Activated CD8-positive, alpha-beta T cell treated with anti-CD3 and anti-CD28 coated beads for 36 hours (primary cell): ENCODE measurements at regions of chr2 and their contacts with region 1.

Region 1: DNA sequence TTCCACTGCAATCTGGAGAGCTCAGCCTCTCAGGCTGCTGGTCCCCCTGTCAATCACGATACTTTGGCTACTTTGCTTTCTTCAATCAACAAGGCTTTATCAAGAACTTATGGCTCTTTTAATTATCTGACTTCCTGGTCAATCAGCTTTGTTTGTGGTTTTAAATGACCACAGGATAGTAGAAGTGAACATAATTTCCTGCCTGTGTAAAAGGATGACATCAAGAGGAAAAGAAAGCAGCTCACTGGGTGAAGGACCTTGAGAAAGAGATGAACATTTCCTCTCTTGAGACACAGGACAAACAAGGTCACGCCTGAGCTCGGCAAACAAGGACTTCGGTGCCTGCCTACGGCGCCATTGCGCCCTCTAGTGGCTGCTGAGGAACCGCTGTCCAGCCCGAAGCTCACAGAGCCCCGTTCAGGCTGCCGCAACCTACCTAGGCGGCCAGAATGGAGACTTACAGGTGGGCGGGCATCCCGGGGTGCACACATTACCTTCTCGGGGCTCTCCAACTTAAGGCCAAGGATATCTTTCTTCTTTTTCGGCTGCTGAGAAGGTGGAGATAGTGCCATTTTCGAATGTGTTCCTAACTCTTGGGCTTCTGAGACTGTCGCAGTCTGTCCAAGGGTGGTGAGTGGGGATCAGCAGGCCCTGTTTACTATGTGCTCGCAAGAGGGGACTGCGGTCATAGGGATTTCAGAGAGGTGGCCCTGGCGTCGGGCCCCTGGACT is 54.0 kb downstream of the IL1RL2 start:
- DNase-seq: peak; percentile 92
- ATAC-seq: peak; percentile 90
- H3K4me3 Mint-ChIP-seq: no peak overlapping the region
- H3K27ac Mint-ChIP-seq: peak overlapping the region; percentile 65
- H3K4me1 Mint-ChIP-seq: peaks cover 32% of the 10 kb centered on the region
- H3K27me3 Mint-ChIP-seq: no peaks in the 10 kb centered on the region
- CTCF ChIP-seq: peak; percentile 92

Region 2: GRCh38 chr2:101883863-101884262 is 356.9 kb before region 1 on chr2:
- CTCF ChIA-PET with region 1: interaction called, 29 read pairs
- POLR2A ChIA-PET with region 1: no interaction called
- intact Hi-C with region 1: no loop called
- DNase-seq: peak; percentile 48
- ATAC-seq: peak; percentile 97
- H3K4me3 Mint-ChIP-seq: no peak overlapping the region
- H3K27ac Mint-ChIP-seq: no peak overlapping the region
- H3K4me1 Mint-ChIP-seq: peaks cover 7% of the 10 kb centered on the region
- H3K27me3 Mint-ChIP-seq: no peaks in the 10 kb centered on the region
- CTCF ChIP-seq: peak; percentile 58

Region 3: DNA sequence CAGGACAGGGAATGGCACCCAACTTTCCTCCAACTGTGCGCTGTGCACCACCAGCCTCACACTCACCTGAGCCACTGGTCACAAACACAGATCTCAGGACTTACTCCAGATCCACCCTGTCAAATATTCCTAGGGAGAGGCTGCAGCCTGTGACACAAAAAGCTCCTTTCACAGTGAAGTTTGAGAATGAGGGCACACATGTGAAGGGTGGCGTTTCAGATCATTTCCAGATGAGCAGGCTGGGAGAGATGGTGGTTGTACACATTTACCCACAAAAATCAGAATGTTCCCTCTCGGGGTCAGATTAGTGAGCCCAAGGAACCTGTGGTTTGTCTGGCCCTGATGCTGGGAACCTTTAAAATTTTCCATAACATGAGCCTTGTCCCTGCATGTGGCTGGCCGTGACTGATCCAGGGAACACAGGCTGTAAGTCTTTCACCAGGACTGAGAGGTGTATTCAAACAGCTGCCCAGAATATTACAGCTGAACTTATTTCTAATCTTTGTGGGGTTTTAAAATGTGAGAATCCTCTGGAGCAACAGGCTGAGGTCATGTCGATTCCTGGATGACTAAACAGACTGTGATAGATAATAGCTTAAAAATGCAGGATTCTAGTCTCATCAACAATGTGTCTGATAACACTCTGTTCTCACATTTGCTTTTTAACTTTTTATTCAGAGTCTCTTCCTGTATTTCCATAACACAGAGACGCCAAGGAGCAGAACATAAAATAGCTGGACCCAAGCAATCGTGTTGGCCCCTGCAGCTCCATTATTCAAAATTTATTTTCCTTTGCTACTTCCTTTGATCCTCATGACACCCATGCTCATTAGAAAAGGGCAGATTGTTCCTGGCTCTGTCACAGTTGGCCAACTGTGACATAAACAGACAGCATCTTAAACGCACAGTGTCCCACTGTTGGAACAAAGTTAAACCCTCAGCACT is 213.5 kb before region 1 on chr2:
- CTCF ChIA-PET with region 1: interaction called, 19 read pairs
- POLR2A ChIA-PET with region 1: interaction called, 3 read pairs
- intact Hi-C with region 1: no loop called
- DNase-seq: no peak
- ATAC-seq: no peak
- H3K4me3 Mint-ChIP-seq: no peak overlapping the region
- H3K27ac Mint-ChIP-seq: no peak overlapping the region
- H3K4me1 Mint-ChIP-seq: peaks cover 15% of the 10 kb centered on the region
- H3K27me3 Mint-ChIP-seq: no peaks in the 10 kb centered on the region
- CTCF ChIP-seq: no peak

Region 4: GRCh38 chr2:102082571-102083392 is 158.0 kb before region 1 on chr2:
- CTCF ChIA-PET with region 1: interaction called, 14 read pairs
- POLR2A ChIA-PET with region 1: interaction called, 4 read pairs
- intact Hi-C with region 1: no loop called
- DNase-seq: peak; percentile 74
- ATAC-seq: peak; percentile 93
- H3K4me3 Mint-ChIP-seq: peak overlapping the region; percentile 56
- H3K27ac Mint-ChIP-seq: peak overlapping the region; percentile 92
- H3K4me1 Mint-ChIP-seq: peaks cover 53% of the 10 kb centered on the region
- H3K27me3 Mint-ChIP-seq: no peaks in the 10 kb centered on the region
- CTCF ChIP-seq: no peak

Region 5: GRCh38 chr2:102141970-102142828 is 98.6 kb before region 1 on chr2 and contains the start of gene IL1R1:
- CTCF ChIA-PET with region 1: interaction called, 15 read pairs
- POLR2A ChIA-PET with region 1: no interaction called
- intact Hi-C with region 1: no loop called
- DNase-seq: no peak
- ATAC-seq: peak; percentile 40
- H3K4me3 Mint-ChIP-seq: peak within 1 kb of the TSS; percentile 39
- H3K27ac Mint-ChIP-seq: no peak within 1 kb of the TSS
- H3K4me1 Mint-ChIP-seq: peaks cover 39% of the 10 kb centered on the region
- H3K27me3 Mint-ChIP-seq: peaks cover 28% of the 10 kb centered on the region
- CTCF ChIP-seq: no peak
- total RNA-seq, gene IL1R1: 0.63 to 0.68 TPM

Region 6: GRCh38 chr2:102217032-102217431 is 23.8 kb before region 1 on chr2:
- CTCF ChIA-PET with region 1: interaction called, 23 read pairs
- POLR2A ChIA-PET with region 1: no interaction called
- intact Hi-C with region 1: no loop called
- DNase-seq: no peak
- ATAC-seq: no peak
- H3K4me3 Mint-ChIP-seq: no peak overlapping the region
- H3K27ac Mint-ChIP-seq: no peak overlapping the region
- H3K4me1 Mint-ChIP-seq: peaks cover 12% of the 10 kb centered on the region
- H3K27me3 Mint-ChIP-seq: no peaks in the 10 kb centered on the region
- CTCF ChIP-seq: no peak

Region 7: DNA sequence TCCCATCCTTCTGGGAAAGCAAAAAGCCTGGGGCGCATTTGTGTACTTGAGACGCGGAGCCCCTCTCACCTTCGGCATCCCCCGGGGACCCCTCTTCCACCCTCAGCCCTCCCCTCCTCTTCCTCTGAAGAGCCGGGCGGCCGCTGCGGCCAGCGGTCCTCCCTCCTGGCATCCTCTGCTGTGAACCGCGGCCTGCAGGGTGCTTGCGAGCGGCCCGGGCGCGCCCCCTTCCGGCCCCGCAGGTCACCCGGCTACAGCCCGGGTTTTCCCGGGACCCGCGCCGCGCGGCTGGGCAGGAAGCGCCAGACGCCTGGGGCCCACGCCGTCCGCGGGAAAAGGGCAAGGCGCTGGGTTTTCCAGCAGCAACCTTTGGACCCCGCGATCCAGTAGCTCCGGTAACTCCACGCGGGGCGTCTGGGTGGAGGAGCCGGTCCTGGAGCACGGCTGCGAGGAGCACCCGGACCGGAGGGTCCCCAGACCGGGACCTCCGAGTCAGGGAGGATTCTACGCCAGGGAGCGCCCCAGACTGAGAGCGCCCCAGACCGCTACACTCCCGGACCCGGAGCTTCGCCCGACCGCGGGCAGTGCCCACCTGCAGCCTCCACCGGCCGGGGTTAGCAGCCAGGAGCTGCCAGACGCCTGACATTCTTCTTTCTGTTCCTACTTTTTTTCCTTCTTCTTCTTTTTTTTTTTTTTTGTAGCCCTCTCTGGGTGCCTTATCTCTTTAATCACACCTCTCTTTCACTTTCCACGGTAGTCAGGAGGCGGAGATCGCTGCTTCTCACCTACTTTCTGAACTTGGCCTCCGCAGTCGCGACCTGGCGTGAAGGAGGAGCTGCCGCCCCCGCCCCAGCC is 114.9 kb after region 1 on chr2 and contains the start of gene IL18R1:
- CTCF ChIA-PET with region 1: interaction called, 27 read pairs
- POLR2A ChIA-PET with region 1: interaction called, 3 read pairs
- intact Hi-C with region 1: no loop called
- DNase-seq: peak; percentile 81
- ATAC-seq: peak; percentile 82
- H3K4me3 Mint-ChIP-seq: peak within 1 kb of the TSS; percentile 96
- H3K27ac Mint-ChIP-seq: peak within 1 kb of the TSS; percentile 98
- H3K4me1 Mint-ChIP-seq: peaks cover 36% of the 10 kb centered on the region
- H3K27me3 Mint-ChIP-seq: no peaks in the 10 kb centered on the region
- CTCF ChIP-seq: peak; percentile 84
- total RNA-seq, gene IL18R1: 15.0 to 15.8 TPM